Aorta (tissue), 5 donors: ENCODE measurements at regions of chr18 and their contacts with region 1.

Region 1: GRCh38 chr18:4631239-4631638 is 176.1 kb upstream of the DLGAP1 start:
- DNase-seq: no peak
- ATAC-seq: no peak
- H3K4me3 ChIP-seq: no peak overlapping the region
- H3K27ac ChIP-seq: no peak overlapping the region
- H3K4me1 ChIP-seq: no peaks in the 10 kb centered on the region
- H3K27me3 ChIP-seq: peaks cover 0 to 1% of the 10 kb centered on the region in 2 donors

Region 2: DNA sequence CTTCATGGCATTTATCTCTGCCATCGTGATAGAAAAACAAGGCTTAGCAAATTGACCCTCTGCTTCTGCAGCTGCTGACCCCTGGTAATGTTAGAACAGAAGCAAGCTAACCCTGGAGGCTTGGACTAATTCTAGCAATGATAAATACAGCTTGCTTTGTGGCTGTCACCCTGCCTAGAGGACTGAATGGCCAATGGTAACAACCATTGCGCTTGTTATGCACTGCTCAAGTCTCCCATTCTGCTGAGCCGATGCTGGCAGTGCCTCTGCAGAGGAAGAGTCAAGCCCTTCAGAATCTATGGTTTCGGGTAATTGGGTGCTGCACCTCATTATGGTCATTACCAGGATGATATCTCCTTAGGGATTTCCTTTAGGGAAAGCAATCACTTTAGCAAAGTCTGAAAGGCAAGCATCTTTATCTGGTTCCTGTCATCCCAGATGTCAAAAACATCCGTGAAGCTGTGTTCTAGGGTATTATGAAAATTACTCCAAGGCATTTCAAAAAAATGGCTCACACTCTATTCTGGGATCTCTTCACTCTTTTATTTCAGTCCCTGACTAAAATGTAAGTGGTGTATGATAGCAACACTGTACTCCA is 10.6 kb after region 1 on chr18:
- intact Hi-C with region 1: loop called in 1 of 2 experiments (anchors 1 kb)
- DNase-seq: no peak
- ATAC-seq: no peak
- H3K4me3 ChIP-seq: no peak overlapping the region
- H3K27ac ChIP-seq: no peak overlapping the region
- H3K4me1 ChIP-seq: no peaks in the 10 kb centered on the region
- H3K27me3 ChIP-seq: no peaks in the 10 kb centered on the region